PC-3 (cell line): ENCODE measurements at regions of chr1 and their contacts with region 1.

Region 1: GRCh38 chr1:28505406-28506187 is at the start of gene RCC1:
- DNase-seq: peak; percentile 99
- ATAC-seq: peak; percentile 73
- H3K4me3 ChIP-seq: peak within 1 kb of the TSS; percentile 92
- H3K27ac ChIP-seq: peak within 1 kb of the TSS; percentile 75
- H3K4me1 ChIP-seq: peaks cover 36% of the 10 kb centered on the region
- H3K27me3 ChIP-seq: no peaks in the 10 kb centered on the region
- CTCF ChIP-seq: no peak
- total RNA-seq, gene RCC1: 96.5 and 119 TPM in 2 replicates

Region 2: GRCh38 chr1:28417429-28417922 is 88.1 kb before region 1 on chr1:
- CTCF ChIA-PET with region 1: no interaction called
- POLR2A ChIA-PET with region 1: no interaction called
- intact Hi-C with region 1: loop called (anchors 5 kb)
- DNase-seq: peak; percentile 63
- ATAC-seq: peak; percentile 81
- H3K4me3 ChIP-seq: no peak overlapping the region; the same call in 1 of the 2 replicates
- H3K27ac ChIP-seq: peak overlapping the region; percentile 43
- H3K4me1 ChIP-seq: peaks cover 35% of the 10 kb centered on the region
- H3K27me3 ChIP-seq: no peaks in the 10 kb centered on the region
- CTCF ChIP-seq: no peak

Region 3: DNA sequence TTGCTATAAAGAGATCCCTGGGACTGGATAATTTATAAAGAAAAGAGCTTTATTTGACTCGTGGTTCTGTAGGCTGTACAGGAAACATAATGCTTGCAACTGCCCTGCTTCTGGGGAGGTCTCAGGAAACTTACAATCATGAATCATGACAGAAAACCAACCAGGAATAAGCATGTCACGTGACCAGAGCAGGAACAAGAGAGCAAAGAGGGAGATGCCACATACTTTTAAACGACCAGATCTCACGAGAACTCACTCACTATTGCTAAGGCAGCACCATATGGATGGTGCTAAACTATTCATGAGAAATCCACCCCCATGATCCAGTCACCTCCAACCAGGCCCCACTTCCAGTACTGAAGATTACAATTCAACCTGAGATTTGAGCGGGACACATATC is 49.5 kb before region 1 on chr1:
- CTCF ChIA-PET with region 1: no interaction called
- POLR2A ChIA-PET with region 1: interaction called, 5 read pairs
- intact Hi-C with region 1: loop called (anchors 5 kb)
- DNase-seq: no peak
- ATAC-seq: peak; percentile 60
- H3K4me3 ChIP-seq: no peak overlapping the region
- H3K27ac ChIP-seq: no peak overlapping the region
- H3K4me1 ChIP-seq: peaks cover 14% of the 10 kb centered on the region; the same call in 1 of the 2 replicates
- H3K27me3 ChIP-seq: no peaks in the 10 kb centered on the region
- CTCF ChIP-seq: no peak